GM12878 (cell line): ENCODE measurements at regions of chr1 and their contacts with region 1.

Region 1: GRCh38 chr1:156860113-156860627 is 495 bp upstream of the NTRK1 start:
- DNase-seq: no peak
- ATAC-seq: peak; percentile 84
- H3K4me3 ChIP-seq: peak overlapping the region; percentile 53; the same call in 1 of the 2 replicates
- H3K27ac ChIP-seq: no peak overlapping the region
- H3K4me1 ChIP-seq: peaks cover 26% of the 10 kb centered on the region
- H3K27me3 ChIP-seq: peaks cover 8 to 22% of the 10 kb centered on the region in 2 experiments
- CTCF ChIP-seq: peak; percentile 63 to 91 (median 77)
- EP300 ChIP-seq: no peak
- POLR2A ChIP-seq: no peak
- RAD21 ChIP-seq: peak; percentile 80

Region 2: DNA sequence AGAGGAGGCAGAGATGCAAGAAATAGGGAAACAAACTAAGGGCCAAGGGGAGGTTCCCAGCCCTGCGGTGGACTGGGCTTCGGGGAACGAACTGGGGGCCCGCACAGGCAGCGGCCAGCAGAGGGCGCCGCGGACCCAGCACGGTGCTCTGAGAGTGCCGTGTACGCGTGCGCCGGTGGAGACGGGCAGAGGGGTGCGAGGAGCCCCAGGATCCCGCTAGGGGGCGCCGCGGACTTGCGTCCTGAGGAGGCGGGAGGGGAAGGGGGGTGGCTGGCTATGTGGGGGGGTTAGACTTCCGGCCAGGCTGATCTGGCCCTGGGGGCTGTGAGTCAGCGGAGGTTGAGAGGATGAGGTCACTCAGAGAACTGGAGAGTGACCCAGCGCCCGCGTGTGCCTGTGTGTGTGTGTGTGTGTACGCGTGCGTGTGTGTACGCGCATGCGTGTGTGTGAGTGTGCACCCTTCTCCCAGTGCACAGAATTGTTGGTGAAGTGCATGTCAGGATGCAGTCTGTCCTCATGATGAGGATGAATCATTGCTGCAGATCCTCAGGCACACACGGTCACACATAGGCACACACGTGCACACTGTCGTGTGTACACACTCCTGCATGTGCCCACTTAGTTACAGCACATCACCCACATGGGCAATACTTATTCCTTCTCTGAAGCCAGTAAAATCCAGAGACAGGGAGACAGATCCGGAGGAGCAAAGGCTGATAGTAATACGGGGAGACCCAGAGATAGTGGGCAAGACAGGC is 200.0 kb before region 1 on chr1:
- CTCF ChIA-PET with region 1: interaction called, 19 read pairs
- POLR2A ChIA-PET with region 1: no interaction called
- RAD21 ChIA-PET with region 1: no interaction called
- SMC1A ChIA-PET with region 1: no interaction called
- in situ Hi-C with region 1: no loop called
- intact Hi-C with region 1: no loop called
- DNase-seq: peak; percentile 70
- ATAC-seq: peak; percentile 84
- H3K4me3 ChIP-seq: peak overlapping the region; percentile 94
- H3K27ac ChIP-seq: peak overlapping the region; percentile 90
- H3K4me1 ChIP-seq: peaks cover 74% of the 10 kb centered on the region
- H3K27me3 ChIP-seq: 0 out of 4 replicates have a peak, but pooled peaks cover 0 to 2% of the 10 kb centered on the region in 2 experiments
- CTCF ChIP-seq: peak; percentile 99 to 100 (median 100); a peak in 5 of 6 replicates
- EP300 ChIP-seq: no peak
- POLR2A ChIP-seq: peak; percentile 69
- RAD21 ChIP-seq: peak; percentile 81

Region 3: DNA sequence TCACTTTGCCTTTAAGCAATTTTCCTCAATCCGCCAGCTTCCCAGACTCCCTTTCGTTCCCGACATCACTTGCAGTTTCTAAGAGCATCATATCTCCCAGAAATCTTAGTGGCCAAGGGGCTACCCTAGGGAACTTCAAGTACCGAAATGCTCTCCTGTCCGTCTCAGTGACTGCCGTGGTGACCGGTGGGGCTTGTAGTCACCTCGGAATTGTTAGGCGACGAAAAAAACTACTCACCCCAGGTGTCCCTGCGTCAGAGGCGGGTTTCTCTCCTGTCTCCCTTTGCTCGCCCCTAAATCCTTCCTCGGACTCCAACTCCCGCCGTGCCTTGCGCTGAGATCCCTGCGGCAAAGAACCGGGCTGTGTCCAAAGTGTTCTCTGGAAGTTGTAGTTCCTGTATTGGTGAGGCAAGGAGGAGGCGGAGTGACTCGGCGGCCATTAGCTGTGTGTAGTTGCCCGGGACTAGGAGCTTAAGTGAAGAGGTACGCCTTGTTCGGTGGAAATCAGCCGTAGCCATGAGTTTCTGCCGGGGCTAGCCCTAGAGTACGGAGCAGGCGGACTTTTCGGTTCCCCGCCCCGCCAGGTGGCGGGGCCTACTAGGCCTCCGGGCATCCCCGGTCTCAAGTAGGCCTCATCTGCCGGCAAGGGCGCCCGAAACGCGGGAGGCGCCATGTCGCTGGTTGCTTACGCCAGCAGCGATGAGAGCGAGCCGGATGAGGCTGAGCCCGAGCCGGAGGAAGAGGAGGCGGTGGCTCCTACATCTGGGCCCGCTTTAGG is 92.9 kb before region 1 on chr1 and contains the start of gene PRCC:
- CTCF ChIA-PET with region 1: interaction called, 18 read pairs
- POLR2A ChIA-PET with region 1: interaction called, 3 read pairs
- RAD21 ChIA-PET with region 1: interaction called, 6 read pairs
- SMC1A ChIA-PET with region 1: interaction called, 5 read pairs
- in situ Hi-C with region 1: no loop called
- intact Hi-C with region 1: no loop called
- DNase-seq: peak; percentile 100
- ATAC-seq: peak; percentile 94
- H3K4me3 ChIP-seq: peak within 1 kb of the TSS; percentile 92
- H3K27ac ChIP-seq: peak within 1 kb of the TSS; percentile 87
- H3K4me1 ChIP-seq: no peaks in the 10 kb centered on the region
- H3K27me3 ChIP-seq: no peaks in the 10 kb centered on the region
- CTCF ChIP-seq: no peak
- EP300 ChIP-seq: no peak
- POLR2A ChIP-seq: peak; percentile 84
- RAD21 ChIP-seq: no peak
- polyA plus RNA-seq, gene PRCC: 23.8 to 30.1 TPM

Region 4: GRCh38 chr1:156797212-156797871 is 62.8 kb before region 1 on chr1:
- CTCF ChIA-PET with region 1: interaction called, 206 read pairs
- POLR2A ChIA-PET with region 1: interaction called, 5 read pairs
- RAD21 ChIA-PET with region 1: interaction called, 115 read pairs
- SMC1A ChIA-PET with region 1: interaction called, 41 read pairs
- in situ Hi-C with region 1: loop called (anchors 5 kb)
- intact Hi-C with region 1: loop called (anchors 1 kb)
- DNase-seq: no peak
- ATAC-seq: peak; percentile 94
- H3K4me3 ChIP-seq: no peak overlapping the region
- H3K27ac ChIP-seq: no peak overlapping the region
- H3K4me1 ChIP-seq: peaks cover 17% of the 10 kb centered on the region
- H3K27me3 ChIP-seq: no peaks in the 10 kb centered on the region
- CTCF ChIP-seq: peak; percentile 78 to 88 (median 82)
- EP300 ChIP-seq: no peak
- POLR2A ChIP-seq: no peak
- RAD21 ChIP-seq: peak; percentile 84

Region 5: DNA sequence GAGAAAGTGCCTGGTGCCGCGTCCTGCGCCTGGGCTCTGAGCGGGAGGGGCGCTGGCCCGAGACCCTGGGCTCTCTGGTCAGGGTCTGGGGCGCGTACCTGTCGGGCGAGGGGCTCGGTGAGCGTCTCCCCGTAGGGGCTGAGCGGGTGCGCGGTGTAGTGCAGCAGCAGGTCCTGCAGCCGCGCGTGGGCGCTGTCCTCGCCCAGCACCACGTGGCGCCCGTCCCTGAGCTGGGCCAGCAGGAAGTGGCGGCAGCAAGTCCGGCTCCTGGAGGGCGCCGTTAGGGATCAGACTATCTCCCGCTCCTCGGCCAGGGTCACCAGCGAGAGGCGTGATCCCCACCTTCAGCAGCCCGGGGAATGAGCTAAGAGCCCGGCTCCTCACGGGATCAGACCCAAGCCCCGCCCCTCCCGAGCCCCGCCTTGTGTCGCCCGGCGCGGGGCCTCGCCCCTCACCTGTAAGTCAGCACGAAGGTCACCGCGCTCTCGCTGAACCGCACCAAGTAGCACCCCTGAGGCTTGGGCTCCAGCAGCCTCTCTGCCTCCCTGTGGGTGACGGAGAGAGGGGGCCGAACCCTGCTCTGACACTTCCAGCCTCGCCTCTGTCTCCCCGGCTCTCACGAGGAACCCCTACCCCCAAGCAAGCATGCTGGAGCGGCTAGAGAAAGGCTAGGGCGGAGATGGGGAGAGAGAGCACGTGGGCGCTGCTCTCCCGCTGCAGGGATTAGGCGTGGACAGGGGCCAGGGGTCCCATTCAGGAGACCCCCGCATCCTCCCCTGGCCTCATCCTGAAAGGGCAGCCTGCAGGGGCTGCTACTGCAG is 46.2 kb before region 1 on chr1:
- CTCF ChIA-PET with region 1: interaction called, 31 read pairs
- POLR2A ChIA-PET with region 1: interaction called, 3 read pairs
- RAD21 ChIA-PET with region 1: interaction called, 10 read pairs
- SMC1A ChIA-PET with region 1: no interaction called
- in situ Hi-C with region 1: no loop called
- intact Hi-C with region 1: no loop called
- DNase-seq: no peak
- ATAC-seq: peak; percentile 69
- H3K4me3 ChIP-seq: peak overlapping the region; percentile 59; the same call in 1 of the 2 replicates
- H3K27ac ChIP-seq: no peak overlapping the region
- H3K4me1 ChIP-seq: peaks cover 20% of the 10 kb centered on the region
- H3K27me3 ChIP-seq: no peaks in the 10 kb centered on the region
- CTCF ChIP-seq: peak; percentile 57 to 80 (median 57)
- EP300 ChIP-seq: no peak
- POLR2A ChIP-seq: peak; percentile 68
- RAD21 ChIP-seq: no peak

Region 6: DNA sequence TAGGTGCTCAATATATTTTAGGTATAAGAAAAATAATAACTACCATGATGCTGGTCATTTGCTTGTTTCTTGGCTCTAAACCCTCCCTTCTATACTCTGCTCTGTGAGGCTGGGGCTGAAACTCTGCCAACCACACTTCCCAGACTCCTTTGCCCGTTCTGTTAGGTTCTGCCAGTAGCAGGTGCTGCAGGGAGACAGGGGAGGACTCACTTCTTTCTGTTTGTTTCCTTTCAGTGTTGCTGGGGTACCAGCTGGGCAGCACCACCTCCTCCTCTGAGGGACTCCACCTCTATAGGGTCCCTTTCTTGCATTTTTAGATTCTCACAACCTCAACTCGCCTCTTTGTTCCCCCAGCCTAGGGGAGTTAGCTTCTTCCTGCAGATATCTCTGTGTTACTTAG is 26.6 kb before region 1 on chr1:
- CTCF ChIA-PET with region 1: interaction called, 248 read pairs
- POLR2A ChIA-PET with region 1: interaction called, 9 read pairs
- RAD21 ChIA-PET with region 1: interaction called, 113 read pairs
- SMC1A ChIA-PET with region 1: interaction called, 123 read pairs
- in situ Hi-C with region 1: no loop called
- intact Hi-C with region 1: no loop called
- DNase-seq: no peak
- ATAC-seq: peak; percentile 37
- H3K4me3 ChIP-seq: no peak overlapping the region
- H3K27ac ChIP-seq: no peak overlapping the region
- H3K4me1 ChIP-seq: peaks cover 24% of the 10 kb centered on the region
- H3K27me3 ChIP-seq: no peaks in the 10 kb centered on the region
- CTCF ChIP-seq: no peak
- EP300 ChIP-seq: no peak
- POLR2A ChIP-seq: no peak
- RAD21 ChIP-seq: no peak

Region 7: GRCh38 chr1:156892190-156893047 is 32.2 kb after region 1 on chr1:
- CTCF ChIA-PET with region 1: interaction called, 37 read pairs
- POLR2A ChIA-PET with region 1: no interaction called
- RAD21 ChIA-PET with region 1: interaction called, 27 read pairs
- SMC1A ChIA-PET with region 1: interaction called, 7 read pairs
- in situ Hi-C with region 1: no loop called
- intact Hi-C with region 1: loop called (anchors 2 kb)
- DNase-seq: no peak
- ATAC-seq: peak; percentile 95
- H3K4me3 ChIP-seq: no peak overlapping the region
- H3K27ac ChIP-seq: no peak overlapping the region
- H3K4me1 ChIP-seq: no peaks in the 10 kb centered on the region
- H3K27me3 ChIP-seq: peaks cover 5 to 11% of the 10 kb centered on the region in 2 experiments
- CTCF ChIP-seq: peak; percentile 63 to 87 (median 68)
- EP300 ChIP-seq: no peak
- POLR2A ChIP-seq: no peak
- RAD21 ChIP-seq: peak; percentile 38; the same call in 1 of the 2 replicates